Heart right ventricle (tissue), 16 donors: ENCODE measurements at regions of chr16 and their contacts with region 1.

Region 1: GRCh38 chr16:28491970-28492474 is at the start of gene CLN3:
- DNase-seq: peak; percentile 87 to 94
- ATAC-seq: peak; percentile 96 to 99 (median 98)
- H3K4me3 ChIP-seq: peak within 1 kb of the TSS; percentile 63 to 100 (median 94)
- H3K27ac ChIP-seq: peak within 1 kb of the TSS; percentile 91 to 99 (median 96)
- H3K4me1 ChIP-seq: peaks cover 0 to 48% (median 14%) of the 10 kb centered on the region in 9 donors
- H3K27me3 ChIP-seq: peaks cover 0 to 3% (median 0%) of the 10 kb centered on the region in 7 donors
- CTCF ChIP-seq: no peak
- total RNA-seq, gene CLN3: 6.5 to 17.6 (median 10.8) TPM

Region 2: GRCh38 chr16:28158136-28158535 is 333.9 kb before region 1 on chr16:
- intact Hi-C with region 1: no loop called
- DNase-seq: no peak
- ATAC-seq: peak in 7 of 8 donors; percentile 43 to 81 (median 71)
- H3K4me3 ChIP-seq: peak overlapping the region in 1 of 10 donors; percentile 5
- H3K27ac ChIP-seq: peak overlapping the region in 6 of 10 donors; percentile 7 to 86 (median 34)
- H3K4me1 ChIP-seq: peaks cover 0 to 55% (median 13%) of the 10 kb centered on the region in 9 donors
- H3K27me3 ChIP-seq: no peaks in the 10 kb centered on the region
- CTCF ChIP-seq: no peak

Region 3: GRCh38 chr16:28168991-28169554 is 322.9 kb before region 1 on chr16:
- intact Hi-C with region 1: no loop called
- DNase-seq: no peak
- ATAC-seq: peak in 1 of 8 donors; percentile 29
- H3K4me3 ChIP-seq: no peak overlapping the region
- H3K27ac ChIP-seq: peak overlapping the region in 1 of 10 donors; percentile 36
- H3K4me1 ChIP-seq: peaks cover 0 to 23% (median 0%) of the 10 kb centered on the region in 9 donors
- H3K27me3 ChIP-seq: no peaks in the 10 kb centered on the region
- CTCF ChIP-seq: no peak

Region 4: GRCh38 chr16:28538733-28539596 is 46.9 kb after region 1 on chr16 and contains the start of gene NUPR1:
- intact Hi-C with region 1: loop called in 3 of 10 experiments (anchors 5 kb)
- DNase-seq: peak; percentile 88 to 97
- ATAC-seq: peak; percentile 97 to 99 (median 98)
- H3K4me3 ChIP-seq: peak within 1 kb of the TSS; percentile 34 to 67 (median 52)
- H3K27ac ChIP-seq: peak within 1 kb of the TSS; percentile 86 to 97 (median 90)
- H3K4me1 ChIP-seq: peaks cover 3 to 55% (median 22%) of the 10 kb centered on the region in 9 donors
- H3K27me3 ChIP-seq: no peaks in the 10 kb centered on the region
- CTCF ChIP-seq: no peak
- total RNA-seq, gene NUPR1: 16.7 to 58.1 (median 27.9) TPM

Region 5: DNA sequence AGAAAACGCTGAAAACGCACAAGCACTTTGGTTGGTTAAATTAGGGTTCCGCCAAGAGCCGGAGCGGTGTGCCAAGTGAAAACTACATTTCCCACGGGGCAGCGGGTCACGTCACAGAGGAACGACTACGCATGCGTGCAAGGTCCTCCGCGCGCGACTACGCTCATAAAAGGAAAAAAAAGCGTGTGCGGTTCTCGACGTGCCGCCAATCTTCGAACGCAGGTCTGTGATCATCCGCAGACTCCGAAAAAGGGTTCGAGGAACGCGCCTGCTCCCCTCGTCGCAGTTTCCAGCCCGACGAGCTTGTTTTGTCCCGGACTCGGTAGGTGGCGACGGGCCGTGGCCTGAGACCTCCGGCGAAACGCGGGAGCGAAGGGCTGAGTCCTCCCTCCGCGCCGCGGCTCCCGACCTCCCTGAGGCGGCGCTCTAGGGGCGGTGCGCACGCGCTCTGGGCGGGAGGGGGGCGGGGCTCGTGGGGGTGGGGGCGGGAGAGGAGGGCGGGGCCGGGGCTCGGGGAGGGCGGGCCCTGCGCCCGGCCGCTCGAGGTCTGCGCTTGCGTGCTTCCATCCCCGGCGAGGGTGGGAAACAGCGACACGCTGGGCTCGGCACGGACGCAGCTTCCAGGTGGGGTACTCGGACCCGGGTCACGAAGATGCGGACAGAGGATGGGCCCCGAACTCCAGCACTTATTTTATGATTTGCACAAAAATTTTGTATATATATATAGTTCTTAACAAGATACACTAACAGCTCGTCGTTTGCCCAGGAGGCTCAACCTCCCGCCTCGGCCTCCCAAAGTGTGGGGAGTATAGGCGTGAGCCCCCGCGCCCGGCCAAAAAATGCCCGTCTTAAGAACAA is 62.0 kb after region 1 on chr16 and contains the start of gene SGF29:
- intact Hi-C with region 1: loop called in 6 of 10 experiments (anchors 1 to 10 kb)
- DNase-seq: peak; percentile 92 to 95
- ATAC-seq: peak; percentile 96 to 98 (median 96)
- H3K4me3 ChIP-seq: peak within 1 kb of the TSS; percentile 14 to 86 (median 67)
- H3K27ac ChIP-seq: peak within 1 kb of the TSS; percentile 93 to 98 (median 98)
- H3K4me1 ChIP-seq: peaks cover 4 to 32% (median 11%) of the 10 kb centered on the region in 9 donors
- H3K27me3 ChIP-seq: no peaks in the 10 kb centered on the region
- CTCF ChIP-seq: peak in 8 of 9 donors; percentile 21 to 70 (median 38)
- total RNA-seq, gene SGF29: 11.1 to 20.9 (median 13.6) TPM